Activated CD4-positive, alpha-beta memory T cell treated with anti-CD3 and anti-CD28 coated beads, Interleukin-2, amount 10 ng/mL, durations not matched to agents 7 days and 5 days (primary cell): ENCODE measurements at regions of chr16 and their contacts with region 1.

Region 1: GRCh38 chr16:24010440-24011089 is 174.8 kb downstream of the PRKCB start:
- DNase-seq: peak; percentile 83
- H3K4me3 Mint-ChIP-seq: no peak overlapping the region
- H3K27ac Mint-ChIP-seq: no peak overlapping the region
- H3K4me1 Mint-ChIP-seq: peaks cover 41% of the 10 kb centered on the region
- H3K27me3 Mint-ChIP-seq: no peaks in the 10 kb centered on the region

Region 2: DNA sequence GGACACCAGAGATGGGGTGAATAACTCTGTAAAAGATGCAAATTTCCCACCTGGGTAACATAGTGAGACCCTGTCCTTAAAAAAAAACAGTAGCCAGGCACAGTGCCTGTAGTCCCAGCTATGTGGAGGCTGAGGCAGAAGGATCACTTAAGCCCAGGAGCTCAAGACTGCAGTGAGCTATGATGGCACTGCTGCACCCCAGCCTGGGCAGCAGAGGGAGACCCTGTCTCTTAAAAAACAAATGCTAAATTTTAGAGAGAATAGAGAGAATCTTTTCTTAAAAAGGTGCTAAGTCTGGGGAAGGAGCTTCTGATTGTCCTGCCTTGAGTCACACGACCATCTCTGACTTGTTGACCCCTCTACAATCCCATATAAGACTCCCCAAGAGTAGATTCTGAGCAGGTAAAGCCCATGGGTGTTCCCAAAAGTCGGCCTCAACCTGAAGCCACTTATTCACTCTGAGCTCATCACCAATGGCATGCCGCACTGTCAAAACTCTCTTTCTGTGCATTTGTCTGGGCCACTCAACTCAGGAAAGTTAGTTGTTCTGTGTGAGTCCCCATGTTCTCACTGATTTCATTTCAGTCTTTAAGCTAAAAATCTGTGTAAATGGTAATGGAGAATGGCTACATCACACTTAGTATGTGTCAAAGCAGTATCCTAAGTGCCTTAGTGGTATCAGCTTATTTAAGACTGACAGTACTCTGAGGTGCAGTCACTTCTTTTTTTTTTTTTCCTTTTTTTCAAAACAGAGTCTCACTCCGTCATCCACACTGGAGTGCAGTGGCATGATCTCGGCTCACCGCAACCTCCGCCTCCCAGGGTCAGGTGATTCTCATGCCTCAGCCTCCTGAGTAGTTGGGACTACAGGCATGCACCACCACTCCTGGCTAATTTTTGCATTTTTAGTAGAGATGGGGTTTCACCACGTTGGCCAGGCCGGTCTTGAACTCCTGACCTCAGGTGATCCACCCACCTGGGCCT is 133.2 kb before region 1 on chr16:
- CTCF ChIA-PET with region 1: interaction called, 20 read pairs
- POLR2A ChIA-PET with region 1: interaction called, 3 read pairs
- DNase-seq: no peak
- H3K4me3 Mint-ChIP-seq: no peak overlapping the region
- H3K27ac Mint-ChIP-seq: no peak overlapping the region
- H3K4me1 Mint-ChIP-seq: peaks cover 60% of the 10 kb centered on the region
- H3K27me3 Mint-ChIP-seq: no peaks in the 10 kb centered on the region

Region 3: GRCh38 chr16:23949630-23950290 is 60.8 kb before region 1 on chr16:
- CTCF ChIA-PET with region 1: interaction called, 11 read pairs
- POLR2A ChIA-PET with region 1: interaction called, 4 read pairs
- DNase-seq: peak; percentile 85
- H3K4me3 Mint-ChIP-seq: peak overlapping the region; percentile 61
- H3K27ac Mint-ChIP-seq: peak overlapping the region; percentile 100
- H3K4me1 Mint-ChIP-seq: peaks cover 71% of the 10 kb centered on the region
- H3K27me3 Mint-ChIP-seq: no peaks in the 10 kb centered on the region

Region 4: DNA sequence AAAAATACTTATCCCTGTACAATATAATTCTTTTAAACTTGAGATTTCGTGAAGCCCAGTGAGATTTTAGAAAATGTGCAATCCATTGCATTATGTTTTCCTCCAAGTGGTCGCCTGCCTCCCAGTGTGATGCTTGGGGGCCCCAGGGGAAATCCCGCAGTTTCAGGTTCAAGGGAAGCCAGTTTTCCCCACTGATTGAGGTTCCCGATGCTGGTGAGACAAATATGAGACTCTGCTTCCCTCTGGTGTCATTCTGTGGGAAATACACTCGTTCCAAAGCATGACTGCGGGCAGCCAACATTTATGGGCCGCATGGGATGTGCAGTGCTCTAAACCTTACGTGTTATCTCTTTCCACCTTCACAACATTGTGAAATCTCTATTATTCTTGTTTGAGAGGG is 26.0 kb after region 1 on chr16:
- CTCF ChIA-PET with region 1: interaction called, 28 read pairs
- POLR2A ChIA-PET with region 1: interaction called, 3 read pairs
- DNase-seq: peak; percentile 26
- H3K4me3 Mint-ChIP-seq: no peak overlapping the region
- H3K27ac Mint-ChIP-seq: no peak overlapping the region
- H3K4me1 Mint-ChIP-seq: peaks cover 50% of the 10 kb centered on the region
- H3K27me3 Mint-ChIP-seq: no peaks in the 10 kb centered on the region